ENCODE measurements at regions of chr2 and their contacts with region 1.

Region 1: GRCh38 chr2:195937176-195937575 is 131.5 kb downstream of the DNAH7 start:
- DNase-seq: no peak
- ATAC-seq: no peak
- H3K4me3 ChIP-seq: no peak overlapping the region
- H3K27ac ChIP-seq: no peak overlapping the region
- H3K4me1 ChIP-seq: no peaks in the 10 kb centered on the region
- H3K27me3 ChIP-seq: no peaks in the 10 kb centered on the region
- CTCF ChIP-seq: no peak

Region 2: GRCh38 chr2:195666107-195666712 is 271.0 kb before region 1 on chr2:
- CTCF ChIA-PET with region 1: no interaction called
- POLR2A ChIA-PET with region 1: interaction called, 6 read pairs
- in situ Hi-C with region 1: no loop called
- intact Hi-C with region 1: loop called (anchors 5 kb)
- DNase-seq: no peak
- ATAC-seq: no peak
- H3K4me3 ChIP-seq: no peak overlapping the region
- H3K27ac ChIP-seq: no peak overlapping the region
- H3K4me1 ChIP-seq: peaks cover 4% of the 10 kb centered on the region
- H3K27me3 ChIP-seq: no peaks in the 10 kb centered on the region
- CTCF ChIP-seq: no peak

Region 3: DNA sequence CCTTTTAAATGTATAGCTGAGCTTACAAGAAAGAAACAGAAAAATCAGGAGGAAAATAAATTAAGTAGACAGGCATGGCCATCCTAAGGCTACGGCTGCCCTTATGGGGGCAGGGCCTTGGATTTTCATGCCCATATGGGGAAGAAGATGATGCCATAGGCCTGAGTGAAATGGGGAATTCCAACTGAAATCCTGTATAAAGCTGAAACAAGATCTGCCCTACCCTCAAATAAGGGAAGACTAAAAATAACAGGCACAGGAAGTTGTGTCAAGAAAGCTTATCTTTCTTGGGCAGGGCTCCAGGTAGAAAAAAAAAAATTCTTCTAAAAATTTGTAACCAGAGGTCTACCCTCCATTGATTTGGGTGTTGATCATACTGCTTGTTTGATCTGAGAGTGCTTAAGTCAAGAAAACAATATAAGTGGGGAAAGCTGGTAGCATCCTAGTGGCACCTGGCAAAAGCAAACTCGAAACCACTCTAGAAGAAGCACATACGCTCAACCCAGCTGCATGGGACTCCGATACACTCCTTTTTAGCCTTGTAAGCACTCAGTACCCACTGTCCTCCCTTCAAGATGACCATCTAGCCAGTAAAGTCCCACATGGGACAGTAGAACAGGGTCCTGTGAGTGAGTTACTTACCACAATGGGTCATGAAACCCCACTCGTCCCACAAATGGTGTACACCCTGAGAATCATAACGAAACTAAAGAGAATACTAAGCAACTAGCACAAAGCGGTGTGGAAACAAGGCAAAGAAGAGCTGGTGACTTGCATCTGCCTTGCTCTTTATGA is 109.1 kb after region 1 on chr2:
- CTCF ChIA-PET with region 1: no interaction called
- POLR2A ChIA-PET with region 1: no interaction called
- in situ Hi-C with region 1: no loop called
- intact Hi-C with region 1: no loop called
- DNase-seq: no peak
- ATAC-seq: no peak
- H3K4me3 ChIP-seq: no peak overlapping the region
- H3K27ac ChIP-seq: no peak overlapping the region
- H3K4me1 ChIP-seq: no peaks in the 10 kb centered on the region
- H3K27me3 ChIP-seq: no peaks in the 10 kb centered on the region
- CTCF ChIP-seq: no peak

Measured in Panc1 (cell line).